ENCODE measurements at regions of chr11 and their contacts with region 1.

Region 1: GRCh38 chr11:75270896-75271418 is 30.4 kb downstream of the TPBGL start:
- DNase-seq: no peak
- H3K4me3 ChIP-seq: no peak overlapping the region
- H3K27ac ChIP-seq: no peak overlapping the region
- H3K4me1 ChIP-seq: no peaks in the 10 kb centered on the region
- H3K27me3 ChIP-seq: no peaks in the 10 kb centered on the region
- CTCF ChIP-seq: no peak

Region 2: GRCh38 chr11:75142714-75143419 is 128.1 kb before region 1 on chr11:
- intact Hi-C with region 1: no loop called
- DNase-seq: peak; percentile 76
- H3K4me3 ChIP-seq: no peak overlapping the region
- H3K27ac ChIP-seq: peak overlapping the region; percentile 46
- H3K4me1 ChIP-seq: peaks cover 6% of the 10 kb centered on the region
- H3K27me3 ChIP-seq: no peaks in the 10 kb centered on the region
- CTCF ChIP-seq: no peak

Region 3: GRCh38 chr11:75525596-75526541 is 254.9 kb after region 1 on chr11 and contains the start of gene GDPD5:
- intact Hi-C with region 1: loop called (anchors 10 kb)
- DNase-seq: peak; percentile 76
- H3K4me3 ChIP-seq: peak within 1 kb of the TSS; percentile 56
- H3K27ac ChIP-seq: no peak within 1 kb of the TSS
- H3K4me1 ChIP-seq: no peaks in the 10 kb centered on the region
- H3K27me3 ChIP-seq: peaks cover 9% of the 10 kb centered on the region
- CTCF ChIP-seq: peak; percentile 20
- total RNA-seq, gene GDPD5: 2.6 to 4.1 TPM